ENCODE measurements at regions of chr3 and their contacts with region 1.

Region 1: DNA sequence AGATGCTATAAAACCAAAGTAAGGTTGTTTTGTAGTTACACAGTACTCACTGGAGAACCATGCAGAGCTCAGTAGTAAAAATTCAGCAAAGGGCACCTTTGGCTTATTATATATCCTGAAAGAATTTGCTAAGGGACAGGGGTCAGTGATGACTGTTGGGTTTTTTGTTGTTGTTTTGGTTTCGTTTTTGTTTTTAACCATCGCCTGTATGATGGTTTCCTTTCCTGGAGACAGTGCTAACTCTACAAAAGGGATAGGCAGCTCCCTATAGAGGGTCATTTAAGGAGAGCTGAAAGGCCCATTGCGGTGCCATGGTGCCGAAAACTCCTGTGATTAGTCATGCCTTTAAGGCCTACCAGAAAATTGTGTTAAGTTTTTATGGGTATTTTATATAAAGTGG is 118.2 kb upstream of the GOLIM4 start:
- H3K4me3 ChIP-seq: no peak overlapping the region
- H3K27ac ChIP-seq: no peak overlapping the region
- H3K4me1 ChIP-seq: no peaks in the 10 kb centered on the region; the same call in 1 of the 2 replicates
- CTCF ChIP-seq: no peak

Region 2: DNA sequence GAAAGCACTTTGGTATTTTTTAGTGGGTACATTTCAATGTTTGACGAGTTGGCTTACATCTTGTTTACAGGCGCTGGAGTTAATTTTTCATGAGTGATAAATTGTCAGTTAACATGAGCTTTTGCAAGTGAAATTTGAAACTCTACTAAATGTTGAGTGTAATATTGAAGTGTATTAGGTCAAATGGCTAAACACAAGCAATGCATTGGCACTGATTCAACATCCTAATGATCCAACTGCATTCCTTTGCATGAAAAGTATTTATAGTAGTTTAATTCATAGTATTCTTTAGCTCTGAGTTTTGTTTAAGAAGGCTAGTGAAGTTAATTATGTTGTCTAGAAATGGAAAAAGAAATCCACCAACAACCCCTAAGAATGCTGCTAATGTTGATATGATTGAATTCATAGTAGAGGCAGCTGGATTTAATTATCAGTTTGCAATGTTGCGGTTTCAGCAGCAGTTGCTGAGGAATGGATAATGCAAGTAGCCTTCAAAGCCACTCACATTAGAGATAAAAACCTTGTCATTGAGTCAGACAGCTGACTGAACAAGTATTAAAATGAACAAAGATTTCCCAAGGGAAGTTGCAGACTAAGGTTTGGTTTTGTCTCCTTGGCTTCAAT is 127.4 kb after region 1 on chr3:
- CTCF ChIA-PET with region 1: no interaction called
- POLR2A ChIA-PET with region 1: no interaction called
- H3K4me3 ChIP-seq: no peak overlapping the region
- H3K27ac ChIP-seq: no peak overlapping the region
- H3K4me1 ChIP-seq: peaks cover 13% of the 10 kb centered on the region
- CTCF ChIP-seq: no peak

Region 3: DNA sequence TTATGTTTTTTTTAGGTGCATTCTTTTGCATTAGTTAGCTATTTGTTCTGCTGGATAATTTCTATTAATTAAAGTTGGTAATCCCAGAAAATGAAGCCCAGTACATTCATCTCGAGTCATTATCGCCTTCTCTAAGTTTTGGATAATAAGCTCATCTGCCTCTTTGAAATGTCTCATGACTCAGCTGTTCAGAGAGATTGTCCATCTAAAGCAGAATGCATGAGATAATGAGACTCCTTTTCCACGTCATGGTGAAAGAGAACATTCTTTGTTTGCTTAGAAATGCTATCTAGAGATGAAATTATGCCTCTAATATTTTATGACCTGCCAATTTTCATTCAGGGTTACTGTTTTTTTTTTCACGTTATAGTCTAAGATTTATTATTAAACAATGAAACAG is 256.5 kb after region 1 on chr3:
- CTCF ChIA-PET with region 1: interaction called, 25 read pairs
- POLR2A ChIA-PET with region 1: no interaction called
- H3K4me3 ChIP-seq: no peak overlapping the region
- H3K27ac ChIP-seq: no peak overlapping the region
- H3K4me1 ChIP-seq: peaks cover 5% of the 10 kb centered on the region; the same call in 1 of the 2 replicates
- CTCF ChIP-seq: no peak

Region 4: GRCh38 chr3:168620826-168621225 is 406.9 kb after region 1 on chr3:
- CTCF ChIA-PET with region 1: interaction called, 15 read pairs
- POLR2A ChIA-PET with region 1: no interaction called
- H3K4me3 ChIP-seq: no peak overlapping the region
- H3K27ac ChIP-seq: no peak overlapping the region
- H3K4me1 ChIP-seq: no peaks in the 10 kb centered on the region; the same call in 1 of the 2 replicates
- CTCF ChIP-seq: no peak

Region 5: GRCh38 chr3:168847291-168847883 is 633.5 kb after region 1 on chr3:
- CTCF ChIA-PET with region 1: interaction called, 39 read pairs
- POLR2A ChIA-PET with region 1: no interaction called
- H3K4me3 ChIP-seq: no peak overlapping the region
- H3K27ac ChIP-seq: no peak overlapping the region
- H3K4me1 ChIP-seq: no peaks in the 10 kb centered on the region
- CTCF ChIP-seq: no peak